ENCODE measurements at regions of chr4 and their contacts with region 1.

Region 1: GRCh38 chr4:36399762-36400353 is 118.4 kb downstream of the DTHD1 start:
- DNase-seq: peak; percentile 16 to 75 (median 56)
- ATAC-seq: peak; percentile 76
- H3K4me3 ChIP-seq: no peak overlapping the region
- H3K4me3 Mint-ChIP-seq: no peak overlapping the region
- H3K27ac ChIP-seq: no peak overlapping the region
- H3K27ac Mint-ChIP-seq: no peak overlapping the region
- H3K4me1 ChIP-seq: no peaks in the 10 kb centered on the region
- H3K4me1 Mint-ChIP-seq: no peaks in the 10 kb centered on the region
- H3K27me3 ChIP-seq: no peaks in the 10 kb centered on the region
- H3K27me3 Mint-ChIP-seq: peaks cover 5% of the 10 kb centered on the region
- CTCF ChIP-seq: peak; percentile 77

Region 2: GRCh38 chr4:36187723-36188333 is 212.0 kb before region 1 on chr4:
- CTCF ChIA-PET with region 1: interaction called, 5 read pairs
- POLR2A ChIA-PET with region 1: no interaction called
- intact Hi-C with region 1: loop called (anchors 5 to 10 kb)
- DNase-seq: peak in 2 of 9 experiments; percentile 47 to 59
- ATAC-seq: no peak
- H3K4me3 ChIP-seq: no peak overlapping the region
- H3K4me3 Mint-ChIP-seq: no peak overlapping the region
- H3K27ac ChIP-seq: peak overlapping the region in 1 of 2 experiments; percentile 45
- H3K27ac Mint-ChIP-seq: no peak overlapping the region
- H3K4me1 ChIP-seq: peaks cover 20% of the 10 kb centered on the region
- H3K4me1 Mint-ChIP-seq: peaks cover 44% of the 10 kb centered on the region
- H3K27me3 ChIP-seq: no peaks in the 10 kb centered on the region
- H3K27me3 Mint-ChIP-seq: no peaks in the 10 kb centered on the region
- CTCF ChIP-seq: peak; percentile 72

Region 3: DNA sequence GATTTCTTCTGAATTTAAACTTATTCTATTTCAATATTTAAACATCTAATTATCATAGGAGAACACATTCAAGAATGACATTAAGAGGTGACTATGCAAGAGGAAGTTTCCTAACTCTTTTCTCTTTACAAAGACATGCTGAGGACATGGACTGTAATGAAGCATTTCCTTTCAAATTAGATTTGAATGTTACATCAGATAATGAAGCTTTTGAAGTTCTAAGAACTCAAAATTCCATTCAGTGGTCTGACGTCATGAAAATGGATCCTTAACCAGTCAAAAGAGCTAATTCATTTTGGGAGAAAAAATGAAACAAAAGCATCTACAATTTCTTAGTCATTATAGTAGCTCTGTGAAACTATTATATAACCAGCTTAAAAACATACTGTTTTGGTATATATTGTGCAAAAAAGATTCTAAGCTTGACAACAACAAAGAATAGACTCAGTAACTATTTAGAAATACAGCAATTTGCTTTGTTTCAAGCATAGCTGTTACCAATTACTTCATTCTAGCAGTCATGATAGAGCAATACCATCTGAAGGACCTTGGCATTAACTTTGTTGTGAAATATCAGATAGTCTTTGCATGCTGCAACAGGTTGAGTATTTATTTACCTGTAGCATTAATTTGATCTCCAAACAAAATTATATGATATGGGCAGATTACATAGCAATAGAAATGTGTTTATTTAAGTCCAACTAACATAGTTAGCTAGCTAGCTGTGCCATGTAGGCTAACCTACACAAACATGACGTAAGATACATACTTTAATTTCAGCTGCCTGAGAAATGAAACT is 132.2 kb before region 1 on chr4:
- CTCF ChIA-PET with region 1: no interaction called
- POLR2A ChIA-PET with region 1: no interaction called
- intact Hi-C with region 1: no loop called
- DNase-seq: peak in 2 of 9 experiments; percentile 35 to 61
- ATAC-seq: peak; percentile 19
- H3K4me3 ChIP-seq: no peak overlapping the region
- H3K4me3 Mint-ChIP-seq: no peak overlapping the region
- H3K27ac ChIP-seq: peak overlapping the region in 1 of 2 experiments; percentile 78
- H3K27ac Mint-ChIP-seq: peak overlapping the region; percentile 30
- H3K4me1 ChIP-seq: peaks cover 18% of the 10 kb centered on the region
- H3K4me1 Mint-ChIP-seq: peaks cover 44% of the 10 kb centered on the region
- H3K27me3 ChIP-seq: no peaks in the 10 kb centered on the region
- H3K27me3 Mint-ChIP-seq: no peaks in the 10 kb centered on the region
- CTCF ChIP-seq: no peak

Region 4: DNA sequence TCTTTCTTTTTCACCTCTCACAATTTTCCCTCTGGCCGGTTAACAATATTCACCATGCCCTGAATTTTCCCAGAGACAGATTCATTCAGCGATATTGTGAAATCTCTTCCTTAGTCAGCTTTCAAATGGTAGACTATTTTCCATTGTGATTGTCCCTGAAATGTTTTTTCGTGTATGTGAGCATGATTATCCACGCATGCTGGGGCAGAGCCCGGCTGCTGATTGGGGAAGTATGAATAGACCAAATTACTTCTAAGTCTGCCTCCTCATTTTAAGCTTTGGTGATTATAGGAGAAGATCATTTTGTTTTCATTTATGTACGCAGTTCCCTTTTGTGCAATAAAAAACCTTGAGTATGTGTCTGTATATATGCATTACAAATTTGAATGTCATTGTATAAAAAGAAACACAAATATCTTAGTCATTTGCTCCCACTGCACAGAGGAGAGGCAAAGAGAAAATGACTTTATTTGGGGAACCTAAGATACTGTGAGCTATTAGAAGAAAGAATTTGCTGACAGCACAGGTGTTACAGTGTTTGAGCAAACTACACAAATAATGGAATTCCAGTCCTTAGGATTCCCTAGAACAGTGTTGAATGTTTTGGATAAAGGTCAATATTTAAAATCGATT is 107.2 kb before region 1 on chr4:
- CTCF ChIA-PET with region 1: interaction called, 6 read pairs
- POLR2A ChIA-PET with region 1: no interaction called
- intact Hi-C with region 1: loop called in 1 of 2 experiments (anchors 1 kb)
- DNase-seq: no peak
- ATAC-seq: no peak
- H3K4me3 ChIP-seq: no peak overlapping the region
- H3K4me3 Mint-ChIP-seq: no peak overlapping the region
- H3K27ac ChIP-seq: no peak overlapping the region
- H3K27ac Mint-ChIP-seq: no peak overlapping the region
- H3K4me1 ChIP-seq: no peaks in the 10 kb centered on the region
- H3K4me1 Mint-ChIP-seq: peaks cover 17% of the 10 kb centered on the region
- H3K27me3 ChIP-seq: no peaks in the 10 kb centered on the region
- H3K27me3 Mint-ChIP-seq: no peaks in the 10 kb centered on the region
- CTCF ChIP-seq: no peak

Region 5: DNA sequence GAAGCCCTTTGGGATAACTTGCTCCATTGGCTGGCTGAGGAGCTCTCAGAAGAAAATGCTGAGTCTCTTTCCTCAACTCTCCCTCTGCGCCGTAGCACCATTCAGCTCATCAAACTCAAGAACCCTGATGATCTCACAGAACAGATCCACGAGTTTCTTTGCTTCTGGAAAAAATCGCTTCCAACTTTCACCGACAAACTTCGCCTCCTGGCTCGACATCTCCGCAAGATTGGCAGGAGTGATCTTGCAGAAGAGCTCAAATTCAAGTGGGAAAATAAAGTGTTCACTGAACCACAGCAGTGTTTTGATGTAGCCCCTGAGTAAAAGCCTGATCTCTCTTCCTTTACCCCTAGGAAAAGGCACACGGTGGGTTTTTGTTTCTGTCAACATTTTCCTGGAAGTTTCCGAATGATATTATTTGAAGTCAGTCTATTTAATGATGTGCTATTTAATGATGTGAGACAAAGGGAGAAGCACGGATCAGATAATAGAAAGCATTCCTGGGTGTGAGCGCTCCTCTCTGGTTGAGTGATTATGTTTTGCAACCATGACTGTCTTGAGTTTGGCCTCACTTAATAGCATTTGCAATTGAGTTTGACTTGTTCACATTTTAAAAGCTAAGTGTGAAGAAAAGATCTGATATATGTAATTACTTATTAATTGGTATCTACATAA is 56.2 kb before region 1 on chr4:
- CTCF ChIA-PET with region 1: interaction called, 118 read pairs
- POLR2A ChIA-PET with region 1: interaction called, 4 read pairs
- intact Hi-C with region 1: no loop called
- DNase-seq: no peak
- ATAC-seq: no peak
- H3K4me3 ChIP-seq: no peak overlapping the region
- H3K4me3 Mint-ChIP-seq: no peak overlapping the region
- H3K27ac ChIP-seq: no peak overlapping the region
- H3K27ac Mint-ChIP-seq: no peak overlapping the region
- H3K4me1 ChIP-seq: no peaks in the 10 kb centered on the region
- H3K4me1 Mint-ChIP-seq: peaks cover 5% of the 10 kb centered on the region
- H3K27me3 ChIP-seq: no peaks in the 10 kb centered on the region
- H3K27me3 Mint-ChIP-seq: no peaks in the 10 kb centered on the region
- CTCF ChIP-seq: no peak

Region 6: DNA sequence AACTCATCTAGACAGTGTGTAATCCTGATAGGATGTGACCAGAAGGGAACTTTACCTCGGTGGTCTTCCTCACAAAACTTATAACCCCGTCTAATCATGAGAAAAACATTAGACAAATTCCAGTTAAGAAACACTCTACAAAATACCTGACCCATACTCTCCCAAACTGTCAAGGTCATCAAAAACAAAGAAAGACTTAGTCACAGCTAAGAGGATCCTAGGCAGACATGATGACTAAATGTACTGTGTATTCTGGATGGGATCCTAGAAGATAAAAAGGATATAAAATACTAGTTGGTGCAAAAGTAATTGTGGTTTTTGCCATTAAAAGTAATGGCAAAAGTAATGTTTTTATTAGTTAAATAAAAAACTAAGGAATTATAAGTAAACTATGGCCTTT is 36.8 kb before region 1 on chr4:
- CTCF ChIA-PET with region 1: interaction called, 23 read pairs
- POLR2A ChIA-PET with region 1: no interaction called
- intact Hi-C with region 1: no loop called
- DNase-seq: no peak
- ATAC-seq: no peak
- H3K4me3 ChIP-seq: no peak overlapping the region
- H3K4me3 Mint-ChIP-seq: no peak overlapping the region
- H3K27ac ChIP-seq: no peak overlapping the region
- H3K27ac Mint-ChIP-seq: no peak overlapping the region
- H3K4me1 ChIP-seq: no peaks in the 10 kb centered on the region
- H3K4me1 Mint-ChIP-seq: no peaks in the 10 kb centered on the region
- H3K27me3 ChIP-seq: no peaks in the 10 kb centered on the region
- H3K27me3 Mint-ChIP-seq: no peaks in the 10 kb centered on the region
- CTCF ChIP-seq: no peak

Region 7: GRCh38 chr4:36385951-36386571 is 13.8 kb before region 1 on chr4:
- CTCF ChIA-PET with region 1: interaction called, 19 read pairs
- POLR2A ChIA-PET with region 1: interaction called, 11 read pairs
- intact Hi-C with region 1: loop called (anchors 2 kb)
- DNase-seq: peak; percentile 10 to 89 (median 40)
- ATAC-seq: peak; percentile 98
- H3K4me3 ChIP-seq: no peak overlapping the region
- H3K4me3 Mint-ChIP-seq: peak overlapping the region; percentile 65
- H3K27ac ChIP-seq: peak overlapping the region; percentile 38 to 46
- H3K27ac Mint-ChIP-seq: peak overlapping the region; percentile 96
- H3K4me1 ChIP-seq: peaks cover 21% of the 10 kb centered on the region
- H3K4me1 Mint-ChIP-seq: peaks cover 32% of the 10 kb centered on the region
- H3K27me3 ChIP-seq: no peaks in the 10 kb centered on the region
- H3K27me3 Mint-ChIP-seq: no peaks in the 10 kb centered on the region
- CTCF ChIP-seq: no peak